ENCODE measurements at regions of chr10 and their contacts with region 1.

Region 1: GRCh38 chr10:54402576-54402975 is 398.5 kb downstream of the PCDH15 start:
- ATAC-seq: peak in 1 of 8 experiments; percentile 63
- H3K4me3 ChIP-seq: no peak overlapping the region
- H3K27ac ChIP-seq: no peak overlapping the region
- H3K4me1 ChIP-seq: no peaks in the 10 kb centered on the region

Region 2: DNA sequence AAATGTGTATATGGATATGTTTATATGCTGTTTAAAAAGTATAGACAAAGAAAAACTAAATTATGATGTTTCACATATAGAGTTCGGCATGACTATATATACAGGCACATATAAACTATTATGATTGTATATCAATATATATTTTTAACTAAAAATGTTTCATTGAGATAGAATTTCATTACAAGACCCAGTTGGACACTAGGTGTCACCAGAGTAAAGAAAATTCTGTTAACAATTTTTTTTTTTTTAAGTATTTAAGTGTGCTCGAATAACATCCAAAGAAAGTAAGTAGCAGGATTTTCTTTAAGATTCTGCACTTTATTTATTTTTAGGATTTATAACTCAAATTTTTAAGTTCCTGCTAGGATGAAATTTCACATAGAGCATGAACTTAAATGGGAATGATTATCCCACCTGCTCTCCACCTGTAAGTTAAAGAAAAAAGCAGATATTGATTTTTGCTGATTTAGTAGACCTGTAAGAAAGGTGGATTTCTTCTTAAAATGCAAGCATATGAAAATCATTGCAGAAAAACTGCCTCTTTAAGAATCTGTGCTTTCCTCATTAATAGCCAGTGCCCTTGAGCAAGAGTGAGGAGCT is 563.0 kb before region 1 on chr10:
- in situ Hi-C with region 1: loop called in 1 of 9 experiments (anchors 25 kb)
- ATAC-seq: no peak
- H3K4me3 ChIP-seq: no peak overlapping the region
- H3K27ac ChIP-seq: no peak overlapping the region
- H3K4me1 ChIP-seq: peaks cover 4 to 10% of the 10 kb centered on the region in 2 donors